ENCODE measurements at regions of chr2 and their contacts with region 1.

Region 1: DNA sequence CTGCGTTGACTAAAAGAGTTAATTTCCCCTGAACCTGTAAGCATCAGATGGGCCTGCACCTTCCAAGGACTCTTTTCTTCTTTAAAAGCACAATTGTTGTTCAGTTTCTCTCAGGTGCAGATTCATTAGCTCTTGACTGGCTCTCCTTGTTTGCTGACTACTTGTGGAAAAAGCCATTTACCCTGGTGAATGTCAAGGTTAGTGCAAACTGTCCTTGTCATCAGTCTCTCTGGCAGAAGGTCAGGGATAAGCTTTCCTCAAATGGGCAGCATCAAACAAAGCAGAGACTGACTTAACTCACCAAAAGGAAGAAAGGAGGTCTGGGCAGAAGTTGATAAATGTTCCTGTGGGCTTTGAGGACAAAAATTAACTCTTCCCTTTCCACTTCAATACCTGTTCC is 922.7 kb downstream of the BCL11A start:
- DNase-seq: no peak
- ATAC-seq: peak in 2 of 4 donors; percentile 72
- H3K4me3 ChIP-seq: no peak overlapping the region
- H3K27ac ChIP-seq: no peak overlapping the region
- H3K4me1 ChIP-seq: peaks cover 0 to 5% (median 0%) of the 10 kb centered on the region in 12 donors
- H3K27me3 ChIP-seq: no peaks in the 10 kb centered on the region
- CTCF ChIP-seq: no peak
- POLR2A ChIP-seq: no peak

Region 2: DNA sequence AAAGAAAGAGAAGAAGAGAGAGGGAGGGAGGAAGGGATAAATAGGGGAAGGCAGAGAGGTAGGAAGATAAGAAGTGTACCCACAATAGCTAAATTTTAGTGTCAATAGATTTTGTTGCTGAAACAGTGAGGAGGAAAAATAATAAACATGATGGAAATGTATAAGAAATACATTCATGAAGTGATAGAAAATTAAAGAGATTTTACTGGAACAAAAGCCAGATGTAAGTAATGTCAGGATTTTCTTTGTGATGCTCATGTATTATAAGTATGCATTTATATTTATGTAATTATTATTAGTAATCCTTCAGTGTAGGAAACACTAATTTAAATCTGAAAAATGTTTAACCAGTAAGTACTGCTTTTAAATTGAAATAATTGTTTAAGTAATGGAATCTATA is 264.5 kb before region 1 on chr2:
- intact Hi-C with region 1: no loop called
- DNase-seq: no peak
- ATAC-seq: no peak
- H3K4me3 ChIP-seq: no peak overlapping the region
- H3K27ac ChIP-seq: no peak overlapping the region
- H3K4me1 ChIP-seq: no peaks in the 10 kb centered on the region
- H3K27me3 ChIP-seq: no peaks in the 10 kb centered on the region
- CTCF ChIP-seq: no peak
- POLR2A ChIP-seq: no peak

Region 3: DNA sequence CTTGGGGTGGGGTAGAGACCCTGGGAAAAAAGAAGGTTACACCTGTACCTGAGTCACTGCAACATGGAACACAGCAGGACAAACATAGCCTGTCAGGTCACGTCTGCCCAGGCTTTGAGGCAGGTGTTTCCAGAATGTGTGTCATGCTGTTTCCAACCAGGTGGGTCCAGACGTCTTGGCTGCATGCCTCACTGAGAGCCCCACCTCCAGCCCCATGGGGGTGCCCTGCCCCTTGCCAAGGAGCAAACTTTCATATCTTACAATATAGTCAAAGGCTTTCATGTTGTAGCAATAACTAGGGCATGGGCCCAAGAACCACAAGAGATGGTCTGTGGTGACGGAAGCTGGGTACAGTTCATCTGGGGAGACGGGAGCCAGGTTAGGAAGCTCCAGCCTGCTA is 423.0 kb after region 1 on chr2:
- intact Hi-C with region 1: loop called in 1 of 10 experiments (anchors 5 kb)
- DNase-seq: no peak
- ATAC-seq: no peak
- H3K4me3 ChIP-seq: no peak overlapping the region
- H3K27ac ChIP-seq: peak overlapping the region in 8 of 12 donors; percentile 49 to 85 (median 74)
- H3K4me1 ChIP-seq: peaks cover 0 to 15% (median 7%) of the 10 kb centered on the region in 12 donors
- H3K27me3 ChIP-seq: no peaks in the 10 kb centered on the region
- CTCF ChIP-seq: no peak
- POLR2A ChIP-seq: no peak

Measured in heart left ventricle (tissue), 16 donors.